ENCODE measurements at regions of chr14 and their contacts with region 1.

Region 1: GRCh38 chr14:54867011-54867410 is 35.6 kb downstream of the GCH1 start:
- DNase-seq: no peak
- ATAC-seq: no peak
- H3K4me3 ChIP-seq: no peak overlapping the region
- H3K27ac ChIP-seq: no peak overlapping the region
- H3K4me1 ChIP-seq: peaks cover 11 to 22% of the 10 kb centered on the region in 2 experiments
- H3K27me3 ChIP-seq: no peaks in the 10 kb centered on the region
- CTCF ChIP-seq: no peak
- POLR2A ChIP-seq: no peak
- RAD21 ChIP-seq: no peak

Region 2: GRCh38 chr14:54947230-54947629 is 80.2 kb after region 1 on chr14:
- CTCF ChIA-PET with region 1: no interaction called
- POLR2A ChIA-PET with region 1: no interaction called
- RAD21 ChIA-PET with region 1: no interaction called
- intact Hi-C with region 1: loop called (anchors 5 kb)
- DNase-seq: no peak
- ATAC-seq: no peak
- H3K4me3 ChIP-seq: no peak overlapping the region
- H3K27ac ChIP-seq: no peak overlapping the region
- H3K4me1 ChIP-seq: no peaks in the 10 kb centered on the region
- H3K27me3 ChIP-seq: no peaks in the 10 kb centered on the region
- CTCF ChIP-seq: no peak
- POLR2A ChIP-seq: no peak
- RAD21 ChIP-seq: no peak

Measured in HCT116 (cell line).